Motor neuron (in vitro differentiated cells): ENCODE measurements at regions of chr5 and their contacts with region 1.

Region 1: GRCh38 chr5:87432460-87432859 is 19.7 kb upstream of the CCNH start:
- ATAC-seq: no peak
- H3K4me3 ChIP-seq: no peak overlapping the region
- H3K27ac ChIP-seq: no peak overlapping the region
- H3K4me1 ChIP-seq: no peaks in the 10 kb centered on the region

Region 2: GRCh38 chr5:87169300-87169991 is 263.0 kb before region 1 on chr5:
- in situ Hi-C with region 1: no loop called
- ATAC-seq: no peak
- H3K4me3 ChIP-seq: no peak overlapping the region
- H3K27ac ChIP-seq: no peak overlapping the region
- H3K4me1 ChIP-seq: no peaks in the 10 kb centered on the region

Region 3: DNA sequence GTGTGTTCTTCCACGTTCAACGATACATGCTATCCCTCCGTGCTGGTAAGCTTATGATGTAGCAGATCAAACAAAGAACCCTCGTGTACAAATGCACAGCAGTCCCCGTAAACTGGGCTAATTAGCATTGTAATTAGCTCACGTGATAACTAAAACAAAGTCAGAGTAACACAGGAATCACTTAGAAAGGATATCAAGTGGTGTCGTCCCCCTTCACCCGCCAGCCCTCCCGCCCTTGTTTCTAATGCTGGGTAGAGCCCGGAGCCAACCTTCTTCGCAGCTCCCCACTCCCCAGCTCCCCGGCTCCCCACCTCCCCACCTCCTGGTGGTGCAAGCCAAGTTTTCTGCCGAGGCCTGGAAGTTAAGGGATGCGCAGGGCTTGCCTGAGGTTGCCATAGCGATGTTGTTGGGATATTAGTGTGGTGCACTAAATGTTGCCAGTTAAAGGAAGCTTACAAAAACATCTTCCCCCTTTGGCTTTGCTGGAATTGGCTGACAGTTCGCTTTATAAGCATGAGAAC is 338.2 kb after region 1 on chr5:
- in situ Hi-C with region 1: loop called in 1 of 9 experiments (anchors 25 kb)
- ATAC-seq: peak in 4 of 8 experiments; percentile 21 to 77 (median 47)
- H3K4me3 ChIP-seq: no peak overlapping the region
- H3K27ac ChIP-seq: no peak overlapping the region
- H3K4me1 ChIP-seq: peaks cover 0 to 5% of the 10 kb centered on the region in 2 donors